ENCODE measurements at regions of chr9 and their contacts with region 1.

Region 1: GRCh38 chr9:130478736-130479575 is 34.2 kb downstream of the ASS1 start:
- DNase-seq: no peak
- ATAC-seq: no peak
- H3K4me3 ChIP-seq: no peak overlapping the region
- H3K27ac ChIP-seq: no peak overlapping the region
- H3K4me1 ChIP-seq: no peaks in the 10 kb centered on the region
- H3K27me3 ChIP-seq: peaks cover 0 to 5% (median 0%) of the 10 kb centered on the region in 7 donors
- CTCF ChIP-seq: no peak

Region 2: GRCh38 chr9:130023144-130023787 is 455.7 kb before region 1 on chr9:
- intact Hi-C with region 1: no loop called
- DNase-seq: no peak
- ATAC-seq: peak in 2 of 8 donors; percentile 38 to 44
- H3K4me3 ChIP-seq: no peak overlapping the region
- H3K27ac ChIP-seq: no peak overlapping the region
- H3K4me1 ChIP-seq: peaks cover 0 to 80% (median 22%) of the 10 kb centered on the region in 9 donors
- H3K27me3 ChIP-seq: no peaks in the 10 kb centered on the region
- CTCF ChIP-seq: no peak

Region 3: GRCh38 chr9:130417602-130418001 is 61.4 kb before region 1 on chr9:
- intact Hi-C with region 1: loop called in 1 of 10 experiments (anchors 10 kb)
- DNase-seq: no peak
- ATAC-seq: no peak
- H3K4me3 ChIP-seq: no peak overlapping the region
- H3K27ac ChIP-seq: no peak overlapping the region
- H3K4me1 ChIP-seq: no peaks in the 10 kb centered on the region
- H3K27me3 ChIP-seq: no peaks in the 10 kb centered on the region
- CTCF ChIP-seq: no peak

Region 4: DNA sequence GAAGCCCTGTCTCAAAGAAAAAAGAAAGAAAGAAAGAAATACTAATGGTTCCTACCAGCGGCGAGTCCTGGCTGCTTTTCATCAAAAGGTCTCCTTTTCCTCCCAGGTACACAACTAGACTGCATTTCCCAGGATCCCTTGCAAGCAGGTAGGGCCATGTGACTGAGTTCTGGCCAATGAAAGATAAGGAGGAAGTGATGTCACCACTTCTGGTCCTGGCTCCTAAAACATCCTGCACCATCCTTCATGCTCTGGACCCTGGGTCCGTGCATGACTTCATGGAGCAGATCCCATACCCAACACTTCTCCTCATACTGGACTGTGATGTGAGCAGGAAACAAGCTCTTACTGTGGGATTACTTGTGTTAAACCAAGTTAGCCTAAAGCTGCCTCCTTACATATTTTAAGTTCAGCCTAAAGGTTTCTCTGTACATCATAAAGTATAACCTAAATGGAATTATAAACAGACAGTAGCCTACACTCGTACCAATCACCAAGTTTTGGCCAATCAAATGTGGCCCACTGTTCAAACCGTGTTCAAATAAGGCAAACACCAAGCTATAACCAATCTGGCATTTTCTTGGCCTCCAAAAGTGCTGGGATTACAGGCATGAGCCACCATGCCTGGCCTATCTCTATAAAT is 70.3 kb after region 1 on chr9:
- intact Hi-C with region 1: no loop called
- DNase-seq: no peak
- ATAC-seq: no peak
- H3K4me3 ChIP-seq: no peak overlapping the region
- H3K27ac ChIP-seq: no peak overlapping the region
- H3K4me1 ChIP-seq: no peaks in the 10 kb centered on the region
- H3K27me3 ChIP-seq: peaks cover 0 to 6% (median 0%) of the 10 kb centered on the region in 7 donors
- CTCF ChIP-seq: no peak